ENCODE measurements at regions of chr13 and their contacts with region 1.

Region 1: DNA sequence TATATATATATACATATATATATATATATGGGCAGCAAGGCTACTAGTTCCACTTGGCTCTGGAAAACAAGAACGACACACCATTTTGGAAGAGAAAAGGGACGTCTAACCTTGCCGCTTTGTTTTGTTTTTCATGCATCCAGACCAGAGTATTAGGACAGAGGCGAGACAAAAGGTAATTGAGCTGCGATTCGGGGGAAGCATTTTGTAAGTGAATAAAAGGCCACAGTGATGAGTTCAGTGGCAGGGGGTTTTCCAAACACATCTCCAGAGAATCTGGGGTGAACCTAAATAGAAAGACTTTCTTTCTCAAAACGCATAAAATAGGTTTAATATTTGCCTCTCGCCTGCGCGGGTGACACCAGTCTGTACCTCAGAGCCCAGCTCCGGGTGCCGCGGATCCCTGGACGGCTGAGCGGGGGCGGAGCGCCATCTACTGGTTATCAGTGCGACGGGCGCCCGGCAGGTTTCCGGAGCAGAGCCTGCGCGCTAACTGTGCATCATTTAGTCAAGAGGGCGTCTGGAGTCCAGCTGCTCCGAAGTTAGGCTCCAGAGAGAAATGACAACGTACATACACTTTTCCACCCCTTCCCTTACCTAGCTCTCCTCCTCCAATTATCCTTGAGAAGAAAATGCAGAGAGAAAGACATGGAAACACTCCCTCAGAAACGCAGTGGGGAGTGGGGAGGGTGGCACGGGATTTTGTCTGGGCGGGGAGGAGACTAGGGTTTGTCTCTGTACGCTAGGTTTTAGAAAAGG is 262.3 kb downstream of the TBC1D4 start:
- DNase-seq: peak; percentile 25
- ATAC-seq: peak; percentile 100
- H3K4me3 ChIP-seq: no peak overlapping the region
- H3K27ac ChIP-seq: no peak overlapping the region
- H3K4me1 ChIP-seq: no peaks in the 10 kb centered on the region
- H3K27me3 ChIP-seq: peaks cover 0 to 8% of the 10 kb centered on the region in 2 experiments; a peak in 3 of 5 replicates
- CTCF ChIP-seq: peak; percentile 95
- EP300 ChIP-seq: no peak
- POLR2A ChIP-seq: no peak
- RAD21 ChIP-seq: peak; percentile 84

Region 2: GRCh38 chr13:73754727-73755292 is 1464.8 kb before region 1 on chr13:
- CTCF ChIA-PET with region 1: interaction called, 7 read pairs
- POLR2A ChIA-PET with region 1: no interaction called
- in situ Hi-C with region 1: loop called (anchors 5 kb)
- intact Hi-C with region 1: loop called (anchors 1 kb)
- DNase-seq: peak; percentile 59
- ATAC-seq: peak; percentile 83
- H3K4me3 ChIP-seq: no peak overlapping the region
- H3K27ac ChIP-seq: no peak overlapping the region
- H3K4me1 ChIP-seq: no peaks in the 10 kb centered on the region
- H3K27me3 ChIP-seq: no peaks in the 10 kb centered on the region
- CTCF ChIP-seq: peak; percentile 76
- EP300 ChIP-seq: no peak
- POLR2A ChIP-seq: no peak
- RAD21 ChIP-seq: peak; percentile 53; the same call in 1 of the 2 replicates

Region 3: GRCh38 chr13:74026753-74027152 is 1192.9 kb before region 1 on chr13:
- CTCF ChIA-PET with region 1: no interaction called
- POLR2A ChIA-PET with region 1: no interaction called
- in situ Hi-C with region 1: loop called (anchors 10 kb)
- intact Hi-C with region 1: no loop called
- DNase-seq: no peak
- ATAC-seq: no peak
- H3K4me3 ChIP-seq: no peak overlapping the region
- H3K27ac ChIP-seq: no peak overlapping the region
- H3K4me1 ChIP-seq: peaks cover 35% of the 10 kb centered on the region
- H3K27me3 ChIP-seq: no peaks in the 10 kb centered on the region
- CTCF ChIP-seq: no peak
- EP300 ChIP-seq: no peak
- POLR2A ChIP-seq: no peak
- RAD21 ChIP-seq: no peak

Region 4: DNA sequence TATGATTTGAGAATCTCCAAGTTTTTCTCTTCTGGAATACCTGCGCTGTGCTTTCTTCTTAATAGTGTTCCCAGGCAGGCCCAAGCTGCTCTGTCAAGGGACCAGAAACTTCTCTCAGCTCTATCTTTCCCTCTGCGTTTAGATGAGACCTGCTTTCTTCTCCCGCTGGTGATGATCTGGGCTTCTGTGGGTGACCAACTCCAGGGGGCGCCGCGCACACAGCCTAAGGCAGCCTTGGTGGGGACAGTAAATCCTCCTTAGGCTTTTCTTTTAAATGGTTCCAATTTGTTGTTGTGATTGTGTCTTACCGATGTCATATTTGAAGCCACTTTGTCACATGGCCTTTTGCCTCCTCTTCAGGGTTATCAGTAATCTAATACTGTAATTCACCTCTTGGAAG is 646.0 kb before region 1 on chr13:
- CTCF ChIA-PET with region 1: no interaction called
- POLR2A ChIA-PET with region 1: no interaction called
- in situ Hi-C with region 1: loop called (anchors 25 kb)
- intact Hi-C with region 1: no loop called
- DNase-seq: peak; percentile 3
- ATAC-seq: peak; percentile 54; the same call in 2 of the 3 replicates
- H3K4me3 ChIP-seq: no peak overlapping the region
- H3K27ac ChIP-seq: no peak overlapping the region
- H3K4me1 ChIP-seq: no peaks in the 10 kb centered on the region
- H3K27me3 ChIP-seq: peaks cover 0 to 15% of the 10 kb centered on the region in 2 experiments; a peak in 1 of 5 replicates
- CTCF ChIP-seq: peak; percentile 29; the same call in 1 of the 2 replicates
- EP300 ChIP-seq: no peak
- POLR2A ChIP-seq: no peak
- RAD21 ChIP-seq: no peak

Region 5: DNA sequence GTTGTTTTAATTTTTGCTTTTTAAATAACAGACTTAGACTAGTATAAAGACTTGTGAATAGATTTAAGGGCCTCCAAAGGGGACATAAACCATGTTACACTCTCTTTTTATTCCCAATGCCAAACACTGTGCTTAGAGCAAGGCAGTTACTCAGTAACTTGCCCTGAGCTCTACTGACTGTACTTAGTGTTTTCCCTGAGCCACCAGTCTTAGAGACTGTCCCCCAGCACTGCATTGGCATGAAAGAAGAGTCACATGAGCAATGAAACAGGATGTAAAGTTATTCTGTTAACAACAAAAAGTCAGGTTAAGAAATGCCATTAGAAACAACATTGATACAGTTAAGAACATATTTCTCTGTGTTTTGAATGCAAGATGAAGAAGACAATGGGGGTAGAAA is 74.5 kb after region 1 on chr13:
- CTCF ChIA-PET with region 1: no interaction called
- POLR2A ChIA-PET with region 1: no interaction called
- in situ Hi-C with region 1: no loop called
- intact Hi-C with region 1: no loop called
- DNase-seq: peak; percentile 28
- ATAC-seq: peak; percentile 96
- H3K4me3 ChIP-seq: no peak overlapping the region
- H3K27ac ChIP-seq: no peak overlapping the region
- H3K4me1 ChIP-seq: peaks cover 10% of the 10 kb centered on the region
- H3K27me3 ChIP-seq: no peaks in the 10 kb centered on the region
- CTCF ChIP-seq: no peak
- EP300 ChIP-seq: no peak
- POLR2A ChIP-seq: no peak
- RAD21 ChIP-seq: no peak

Measured in HepG2 (cell line).